A673 (cell line): ENCODE measurements at regions of chr1 and their contacts with region 1.

Region 1: DNA sequence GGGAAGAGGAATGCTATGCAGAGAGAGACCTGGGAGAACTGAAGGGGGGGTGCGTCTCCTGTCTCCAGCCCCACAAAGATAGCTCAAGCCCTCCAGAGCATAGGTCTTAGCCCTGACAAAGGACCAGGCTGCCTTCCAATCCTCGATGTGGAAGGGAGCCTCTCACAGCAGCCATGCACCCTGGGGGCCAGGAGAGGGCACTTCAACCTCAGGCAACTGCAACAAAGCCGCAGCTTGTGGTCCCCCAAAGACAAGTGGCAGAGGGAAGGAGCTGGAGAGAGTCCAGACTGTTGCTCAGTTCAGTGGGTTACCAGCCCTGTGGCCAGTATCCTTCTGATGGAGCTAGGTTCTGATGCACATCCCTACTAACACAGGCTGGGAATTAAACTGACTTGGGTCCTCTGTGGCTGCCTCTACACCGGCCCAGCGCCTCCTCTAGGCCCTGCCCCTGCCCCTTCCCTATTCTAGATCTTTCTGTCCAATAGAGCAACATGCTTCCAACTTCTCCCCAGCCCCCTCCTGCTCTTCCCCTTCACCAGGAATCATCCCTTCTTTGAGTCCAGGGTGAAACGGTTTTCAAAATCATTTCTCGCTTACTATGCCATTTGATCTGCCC is 100.8 kb upstream of the SPATA6 start:
- DNase-seq: peak; percentile 79
- H3K4me3 ChIP-seq: no peak overlapping the region
- H3K27ac ChIP-seq: no peak overlapping the region
- H3K4me1 ChIP-seq: no peaks in the 10 kb centered on the region
- H3K27me3 ChIP-seq: no peaks in the 10 kb centered on the region
- CTCF ChIP-seq: peak; percentile 85

Region 2: GRCh38 chr1:48603222-48603621 is 30.5 kb after region 1 on chr1:
- CTCF ChIA-PET with region 1: no interaction called
- POLR2A ChIA-PET with region 1: no interaction called
- intact Hi-C with region 1: no loop called
- DNase-seq: peak; percentile 17
- H3K4me3 ChIP-seq: no peak overlapping the region
- H3K27ac ChIP-seq: no peak overlapping the region
- H3K4me1 ChIP-seq: no peaks in the 10 kb centered on the region
- H3K27me3 ChIP-seq: no peaks in the 10 kb centered on the region
- CTCF ChIP-seq: no peak

Region 3: DNA sequence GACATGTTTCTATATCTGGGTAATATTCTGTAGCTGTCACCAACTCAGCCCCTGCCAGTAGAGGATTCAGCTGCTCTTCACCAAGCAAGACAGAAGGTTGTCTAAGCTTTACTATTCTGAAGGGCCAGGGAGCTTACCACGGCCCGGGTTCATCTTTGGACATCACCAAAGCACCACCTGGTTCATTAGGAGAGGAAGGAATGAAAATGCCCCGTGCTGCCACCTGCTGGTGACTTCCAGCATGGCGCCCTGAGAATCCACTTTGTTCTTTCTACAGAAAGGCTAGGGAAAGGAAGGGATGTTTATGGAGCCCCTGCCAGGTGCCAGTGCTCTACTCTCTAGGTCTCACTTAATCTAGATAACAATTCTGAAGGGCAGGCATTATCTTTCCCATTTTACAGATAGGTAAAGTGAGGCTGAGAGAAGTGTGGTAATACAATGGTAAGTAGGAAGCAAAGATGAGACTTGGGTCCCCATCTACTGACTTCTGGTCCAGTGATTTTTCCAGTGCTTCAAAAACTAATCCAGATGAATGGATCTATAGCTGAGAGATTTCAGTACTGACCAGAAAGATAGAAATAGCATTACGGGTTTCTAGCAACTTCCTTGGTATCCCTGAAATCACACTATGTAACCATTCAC is 124.4 kb after region 1 on chr1:
- CTCF ChIA-PET with region 1: interaction called, 27 read pairs
- POLR2A ChIA-PET with region 1: no interaction called
- intact Hi-C with region 1: loop called (anchors 1 kb)
- DNase-seq: peak; percentile 69
- H3K4me3 ChIP-seq: no peak overlapping the region
- H3K27ac ChIP-seq: no peak overlapping the region
- H3K4me1 ChIP-seq: peaks cover 12% of the 10 kb centered on the region
- H3K27me3 ChIP-seq: no peaks in the 10 kb centered on the region
- CTCF ChIP-seq: peak; percentile 97

Region 4: DNA sequence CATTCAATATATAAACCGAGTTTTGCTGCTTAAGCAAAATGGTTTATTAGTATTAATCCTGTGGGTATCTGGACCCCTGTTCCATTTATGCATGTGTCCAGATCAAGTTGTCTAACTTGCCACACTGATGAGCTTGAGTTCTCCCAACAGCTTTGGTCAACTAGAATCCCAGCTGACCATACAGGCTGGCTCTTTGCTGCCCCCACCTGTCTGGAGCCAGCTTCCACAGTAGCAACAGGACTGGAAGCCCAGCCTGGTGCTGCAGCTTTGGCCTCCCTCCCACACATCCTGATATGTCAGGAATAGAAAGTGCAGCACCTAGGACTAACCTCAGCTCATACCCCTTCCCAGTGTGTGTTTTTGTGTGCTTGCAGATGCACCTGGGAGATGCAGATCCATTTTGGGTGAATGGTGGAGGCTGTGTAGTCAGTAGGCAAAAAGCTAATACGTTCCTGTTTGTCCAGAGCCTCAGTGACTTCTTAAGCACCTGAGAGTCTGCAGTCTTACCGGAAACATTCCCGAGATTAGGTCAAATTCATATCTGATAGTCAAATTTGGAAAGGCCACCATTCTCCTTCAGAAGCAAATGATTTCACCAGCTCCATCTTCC is 244.9 kb after region 1 on chr1:
- CTCF ChIA-PET with region 1: interaction called, 8 read pairs
- POLR2A ChIA-PET with region 1: no interaction called
- intact Hi-C with region 1: loop called (anchors 5 kb)
- DNase-seq: peak; percentile 53
- H3K4me3 ChIP-seq: no peak overlapping the region
- H3K27ac ChIP-seq: no peak overlapping the region
- H3K4me1 ChIP-seq: no peaks in the 10 kb centered on the region
- H3K27me3 ChIP-seq: no peaks in the 10 kb centered on the region
- CTCF ChIP-seq: peak; percentile 80

Region 5: DNA sequence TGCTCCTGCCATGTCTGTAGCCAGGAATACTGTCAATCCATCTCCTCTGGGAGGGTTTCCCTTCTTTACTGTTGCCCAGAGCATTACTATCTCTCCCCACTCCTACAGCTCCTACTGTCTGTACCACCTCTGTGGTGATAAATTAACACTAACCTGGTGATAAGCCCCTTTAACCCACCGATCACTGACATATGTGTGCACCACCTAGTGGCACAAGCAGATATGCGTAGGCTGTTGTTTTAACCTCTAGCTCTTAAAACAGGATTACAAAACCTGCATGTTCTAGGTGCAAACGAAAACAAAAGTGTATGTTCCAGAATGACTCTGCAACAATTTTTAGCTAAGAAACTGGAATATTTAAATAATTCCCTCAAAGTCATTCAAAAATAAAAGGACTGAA is 297.8 kb after region 1 on chr1:
- CTCF ChIA-PET with region 1: interaction called, 6 read pairs
- POLR2A ChIA-PET with region 1: no interaction called
- intact Hi-C with region 1: loop called (anchors 5 kb)
- DNase-seq: peak; percentile 34
- H3K4me3 ChIP-seq: no peak overlapping the region
- H3K27ac ChIP-seq: no peak overlapping the region
- H3K4me1 ChIP-seq: no peaks in the 10 kb centered on the region
- H3K27me3 ChIP-seq: no peaks in the 10 kb centered on the region
- CTCF ChIP-seq: peak; percentile 87

Region 6: DNA sequence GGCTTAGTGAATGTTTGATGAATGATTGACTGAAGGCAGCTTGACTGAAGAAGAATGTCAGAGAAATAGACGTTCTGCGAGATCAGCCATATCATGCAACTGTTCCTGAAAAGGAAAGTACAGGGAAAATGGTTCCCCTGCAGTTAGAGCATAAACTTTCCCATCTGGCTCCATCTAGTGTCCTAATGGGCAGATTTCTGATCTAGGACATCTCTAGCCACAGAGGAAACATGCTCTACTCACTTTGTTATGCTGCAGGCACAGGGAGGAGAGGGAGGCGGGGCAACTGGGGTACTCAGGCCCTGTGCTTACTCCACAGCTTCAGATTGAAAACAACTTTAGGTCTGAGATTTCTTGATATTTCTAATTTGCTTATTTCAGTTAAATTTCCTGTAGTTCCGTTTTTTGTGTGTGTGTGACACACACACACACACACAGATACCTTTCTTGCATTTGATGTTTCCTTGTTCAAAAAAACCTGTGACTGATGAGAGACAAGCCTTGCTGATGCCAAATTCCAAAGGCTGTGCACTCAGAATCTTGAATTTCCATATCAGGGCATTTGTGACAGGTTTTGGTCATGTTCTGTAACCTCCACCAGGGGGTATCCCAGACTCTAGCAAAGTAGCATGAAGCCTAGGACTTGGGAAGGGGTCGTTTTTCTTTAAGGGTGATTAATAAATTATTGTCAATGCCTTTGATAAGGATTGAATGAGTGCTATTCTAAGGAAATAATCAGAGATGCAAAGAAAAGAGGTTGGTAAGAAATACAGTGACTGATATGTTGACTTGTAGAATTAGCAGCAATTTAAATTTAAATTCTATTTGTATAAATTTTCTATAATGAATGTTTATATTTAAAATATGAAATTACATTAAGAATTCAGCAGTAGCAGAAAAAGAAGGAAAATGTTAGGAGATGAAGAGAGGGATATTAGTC is 343.6 kb after region 1 on chr1:
- CTCF ChIA-PET with region 1: interaction called, 6 read pairs
- POLR2A ChIA-PET with region 1: no interaction called
- intact Hi-C with region 1: loop called (anchors 1 kb)
- DNase-seq: peak; percentile 84
- H3K4me3 ChIP-seq: no peak overlapping the region
- H3K27ac ChIP-seq: peak overlapping the region; percentile 28
- H3K4me1 ChIP-seq: peaks cover 9% of the 10 kb centered on the region
- H3K27me3 ChIP-seq: no peaks in the 10 kb centered on the region
- CTCF ChIP-seq: peak; percentile 71

Region 7: DNA sequence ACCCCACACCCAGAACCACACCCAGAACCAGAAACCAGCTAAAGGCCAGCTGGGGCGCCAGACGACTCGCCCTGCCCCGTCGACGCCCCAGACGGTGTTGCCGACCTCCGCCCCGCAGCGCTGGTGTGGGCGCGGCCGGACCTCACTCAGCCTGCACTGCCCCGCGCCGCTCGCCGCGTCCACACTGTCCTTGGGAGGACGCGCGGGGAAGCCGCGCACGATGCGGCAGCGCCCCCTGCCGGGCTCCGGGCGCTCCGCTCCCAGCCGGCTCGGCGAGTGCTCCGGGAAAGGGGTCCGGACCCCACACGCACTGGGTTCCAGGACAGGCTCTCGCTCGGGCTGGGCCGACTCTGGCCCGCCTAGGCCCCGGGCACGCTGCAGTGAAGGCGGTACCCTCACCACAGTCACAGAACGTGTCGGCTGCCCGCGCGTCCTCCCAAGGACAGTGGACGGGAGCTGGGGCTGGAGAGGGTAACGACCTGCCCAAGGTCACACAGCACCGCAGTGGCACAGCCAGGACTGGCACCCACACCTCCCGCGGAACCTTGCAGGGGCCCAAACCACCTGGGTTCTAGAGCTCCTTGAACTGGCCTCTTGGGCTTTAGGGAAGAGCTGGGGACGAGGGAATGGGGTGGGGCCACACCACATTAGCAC is 1760.3 kb after region 1 on chr1:
- CTCF ChIA-PET with region 1: interaction called, 3 read pairs
- POLR2A ChIA-PET with region 1: no interaction called
- intact Hi-C with region 1: loop called (anchors 10 kb)
- DNase-seq: peak; percentile 68
- H3K4me3 ChIP-seq: peak overlapping the region; percentile 62
- H3K27ac ChIP-seq: peak overlapping the region; percentile 53
- H3K4me1 ChIP-seq: no peaks in the 10 kb centered on the region
- H3K27me3 ChIP-seq: no peaks in the 10 kb centered on the region
- CTCF ChIP-seq: peak; percentile 81